Naive thymus-derived CD4-positive, alpha-beta T cell (primary cell): ENCODE measurements at regions of chr10 and their contacts with region 1.

Region 1: GRCh38 chr10:92848441-92849233 is at the start of gene EXOC6:
- DNase-seq: peak; percentile 78 to 93 (median 91)
- ATAC-seq: peak; percentile 91
- H3K4me3 ChIP-seq: peak within 1 kb of the TSS; percentile 70
- H3K4me3 Mint-ChIP-seq: peak within 1 kb of the TSS; percentile 81 to 94 (median 91)
- H3K27ac ChIP-seq: peak within 1 kb of the TSS; percentile 95
- H3K27ac Mint-ChIP-seq: peak within 1 kb of the TSS; percentile 56 to 95 (median 92)
- H3K4me1 ChIP-seq: peaks cover 7 to 19% of the 10 kb centered on the region in 2 donors
- H3K4me1 Mint-ChIP-seq: peaks cover 4 to 48% (median 36%) of the 10 kb centered on the region in 7 donors
- H3K27me3 ChIP-seq: no peaks in the 10 kb centered on the region
- H3K27me3 Mint-ChIP-seq: no peaks in the 10 kb centered on the region
- total RNA-seq, gene EXOC6: 8.1 to 12.1 (median 11.4) TPM

Region 2: DNA sequence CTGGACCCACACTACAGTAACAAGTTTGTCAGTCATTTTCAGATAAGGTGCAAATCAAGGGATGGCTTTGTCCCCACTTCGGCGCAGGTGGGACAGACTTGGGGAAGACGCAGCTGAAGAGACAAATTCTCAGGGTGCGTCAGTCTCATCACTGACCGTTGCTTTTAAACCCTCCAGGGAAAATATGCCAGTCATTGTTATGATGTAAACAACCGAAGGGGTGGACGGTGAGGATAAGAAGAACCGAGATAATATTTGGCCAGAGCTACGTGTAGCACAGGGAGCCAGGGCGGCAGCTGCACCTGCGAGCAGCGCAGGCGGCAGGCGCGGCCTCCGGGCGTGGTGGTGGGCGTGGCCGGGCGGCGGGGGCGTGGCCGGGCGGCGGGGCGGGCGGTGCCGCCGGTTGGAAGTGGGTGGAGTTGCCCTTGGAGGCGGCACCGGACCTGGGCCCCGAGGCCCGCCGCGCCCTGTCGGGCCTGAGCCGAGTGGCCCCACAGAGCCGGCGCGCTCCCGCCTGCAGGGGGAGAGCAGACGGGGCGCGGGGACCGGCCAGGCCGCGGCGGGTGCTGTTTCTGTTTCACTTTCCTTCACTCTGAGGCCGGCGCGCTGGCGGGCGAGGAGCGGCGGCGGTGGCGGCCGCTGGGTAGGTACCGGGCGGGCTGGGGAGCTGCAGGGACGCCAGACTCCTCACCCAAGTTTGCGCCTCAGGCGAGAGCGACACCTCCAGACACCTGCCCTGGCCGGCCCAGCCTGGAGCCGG is 1628.3 kb before region 1 on chr10 and contains the start of gene PCGF5:
- CTCF ChIA-PET with region 1: no interaction called
- POLR2A ChIA-PET with region 1: no interaction called
- intact Hi-C with region 1: loop called in 1 of 2 experiments (anchors 2 kb)
- DNase-seq: peak; percentile 82 to 98 (median 90)
- ATAC-seq: peak; percentile 98
- H3K4me3 ChIP-seq: peak within 1 kb of the TSS; percentile 68
- H3K4me3 Mint-ChIP-seq: peak within 1 kb of the TSS; percentile 84 to 96 (median 90)
- H3K27ac ChIP-seq: peak within 1 kb of the TSS; percentile 90
- H3K27ac Mint-ChIP-seq: peak within 1 kb of the TSS; percentile 76 to 95 (median 89)
- H3K4me1 ChIP-seq: peaks cover 28 to 34% of the 10 kb centered on the region in 2 donors
- H3K4me1 Mint-ChIP-seq: peaks cover 33 to 69% (median 55%) of the 10 kb centered on the region in 7 donors
- H3K27me3 ChIP-seq: no peaks in the 10 kb centered on the region
- H3K27me3 Mint-ChIP-seq: no peaks in the 10 kb centered on the region
- total RNA-seq, gene PCGF5: 41.2 to 62.3 (median 57.4) TPM

Region 3: GRCh38 chr10:92240289-92241157 is 608.1 kb before region 1 on chr10:
- CTCF ChIA-PET with region 1: no interaction called
- POLR2A ChIA-PET with region 1: no interaction called
- intact Hi-C with region 1: loop called in 1 of 2 experiments (anchors 10 kb)
- DNase-seq: peak in 8 of 9 donors; percentile 19 to 43 (median 28)
- ATAC-seq: peak; percentile 58
- H3K4me3 ChIP-seq: peak overlapping the region; percentile 78
- H3K4me3 Mint-ChIP-seq: peak overlapping the region; percentile 88 to 99 (median 92)
- H3K27ac ChIP-seq: peak overlapping the region; percentile 58
- H3K27ac Mint-ChIP-seq: peak overlapping the region; percentile 31 to 94 (median 71)
- H3K4me1 ChIP-seq: peaks cover 0 to 11% of the 10 kb centered on the region in 2 donors
- H3K4me1 Mint-ChIP-seq: peaks cover 14 to 57% (median 31%) of the 10 kb centered on the region in 7 donors
- H3K27me3 ChIP-seq: no peaks in the 10 kb centered on the region
- H3K27me3 Mint-ChIP-seq: peaks cover 0 to 37% (median 0%) of the 10 kb centered on the region in 5 donors

Region 4: GRCh38 chr10:92689663-92690210 is 158.9 kb before region 1 on chr10 and contains the start of gene HHEX:
- CTCF ChIA-PET with region 1: no interaction called
- POLR2A ChIA-PET with region 1: no interaction called
- intact Hi-C with region 1: loop called in 1 of 2 experiments (anchors 1 kb)
- DNase-seq: peak in 3 of 9 donors; percentile 19 to 50 (median 39)
- ATAC-seq: peak; percentile 82
- H3K4me3 ChIP-seq: peak within 1 kb of the TSS; percentile 37
- H3K4me3 Mint-ChIP-seq: peak within 1 kb of the TSS; percentile 73 to 90 (median 82)
- H3K27ac ChIP-seq: no peak within 1 kb of the TSS
- H3K27ac Mint-ChIP-seq: no peak within 1 kb of the TSS
- H3K4me1 ChIP-seq: peaks cover 0 to 29% of the 10 kb centered on the region in 2 donors
- H3K4me1 Mint-ChIP-seq: peaks cover 16 to 31% (median 27%) of the 10 kb centered on the region in 7 donors
- H3K27me3 ChIP-seq: peaks cover 10 to 26% of the 10 kb centered on the region in 2 donors
- H3K27me3 Mint-ChIP-seq: peaks cover 40 to 88% (median 75%) of the 10 kb centered on the region in 5 donors
- total RNA-seq, gene HHEX: 0.27 to 21.4 (median 5.5) TPM in 3 of 5 experiments, not detected in the others

Region 5: DNA sequence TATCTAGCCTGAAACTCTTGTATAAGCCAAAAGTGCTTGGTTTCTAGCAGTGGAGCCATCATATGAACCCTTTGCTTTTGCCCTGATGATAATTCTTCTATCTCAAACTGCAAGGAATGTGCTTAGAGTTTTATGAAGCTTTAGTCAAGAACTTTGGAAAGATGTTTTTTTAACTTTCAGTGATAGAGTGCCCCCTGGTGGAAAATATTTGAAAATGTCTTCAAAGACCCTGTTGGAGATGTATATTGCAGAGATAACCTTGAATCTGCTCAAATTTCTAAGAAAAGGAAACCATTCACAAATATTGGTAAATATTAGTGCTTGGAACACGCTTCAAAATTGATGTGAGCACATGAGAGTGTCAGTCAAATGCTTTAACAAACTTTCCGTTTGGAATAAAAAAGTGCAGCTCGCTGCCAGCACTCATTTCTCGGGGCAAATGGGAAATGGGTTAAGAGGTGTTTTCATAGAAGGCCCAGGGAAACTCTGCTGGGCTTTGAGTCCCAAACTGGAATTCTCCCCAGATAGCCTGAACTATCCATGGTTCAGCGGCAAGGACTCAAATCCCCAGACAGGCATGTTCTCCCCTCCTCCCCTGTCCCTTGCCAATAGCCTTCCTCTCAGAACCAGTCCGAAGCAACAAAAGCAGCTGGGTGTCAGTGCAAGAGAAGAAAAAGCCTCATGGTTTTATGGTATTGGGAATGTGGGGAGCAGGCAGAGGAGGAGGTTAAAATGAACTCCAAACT is 504.2 kb after region 1 on chr10:
- CTCF ChIA-PET with region 1: no interaction called
- POLR2A ChIA-PET with region 1: no interaction called
- intact Hi-C with region 1: loop called in 1 of 2 experiments (anchors 2 kb)
- DNase-seq: peak in 7 of 9 donors; percentile 16 to 53 (median 47)
- ATAC-seq: no peak
- H3K4me3 ChIP-seq: no peak overlapping the region
- H3K4me3 Mint-ChIP-seq: no peak overlapping the region
- H3K27ac ChIP-seq: no peak overlapping the region
- H3K27ac Mint-ChIP-seq: no peak overlapping the region
- H3K4me1 ChIP-seq: no peaks in the 10 kb centered on the region
- H3K4me1 Mint-ChIP-seq: peaks cover 0 to 3% (median 0%) of the 10 kb centered on the region in 7 donors
- H3K27me3 ChIP-seq: peaks cover 0 to 7% of the 10 kb centered on the region in 2 donors
- H3K27me3 Mint-ChIP-seq: peaks cover 0 to 23% (median 18%) of the 10 kb centered on the region in 5 donors

Region 6: DNA sequence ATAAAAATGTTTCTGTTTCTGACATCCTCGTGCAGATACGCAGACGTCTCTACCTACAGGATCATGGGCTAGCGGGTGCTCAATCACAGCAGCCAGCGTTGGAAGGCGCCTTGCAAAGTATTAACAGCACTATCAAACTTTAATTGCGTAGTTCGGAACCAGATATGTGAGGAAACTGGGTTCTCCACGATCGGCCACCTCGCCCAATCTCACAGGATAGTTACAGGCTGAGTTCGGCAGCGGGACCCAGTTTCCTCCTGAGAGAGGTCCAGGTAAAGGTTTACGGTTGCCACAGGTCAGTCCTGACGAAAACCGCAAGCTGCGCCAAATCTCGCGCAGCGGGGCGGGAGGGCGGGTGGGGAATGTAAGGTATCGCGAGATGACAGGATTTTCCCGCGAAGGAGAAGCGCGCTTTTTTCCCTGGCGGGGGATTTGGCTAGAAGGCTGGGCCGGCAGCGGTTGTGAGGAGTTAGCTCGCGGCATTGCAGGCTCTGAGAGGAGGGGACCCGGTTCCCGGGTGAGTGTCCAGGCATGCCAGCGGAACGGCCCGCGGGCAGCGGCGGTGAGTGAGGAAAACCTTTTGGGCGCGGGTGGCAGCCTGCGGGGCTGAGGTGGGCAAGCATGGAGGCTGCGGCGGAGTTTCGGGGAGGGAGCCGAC is 1696.9 kb after region 1 on chr10 and contains the start of gene HELLS:
- CTCF ChIA-PET with region 1: no interaction called
- POLR2A ChIA-PET with region 1: no interaction called
- intact Hi-C with region 1: loop called in 1 of 2 experiments (anchors 10 kb)
- DNase-seq: peak; percentile 30 to 76 (median 63)
- ATAC-seq: peak; percentile 75
- H3K4me3 ChIP-seq: peak within 1 kb of the TSS; percentile 71
- H3K4me3 Mint-ChIP-seq: peak within 1 kb of the TSS; percentile 89 to 97 (median 94)
- H3K27ac ChIP-seq: peak within 1 kb of the TSS; percentile 63
- H3K27ac Mint-ChIP-seq: peak within 1 kb of the TSS; percentile 75 to 97 (median 87)
- H3K4me1 ChIP-seq: peaks cover 3 to 8% of the 10 kb centered on the region in 2 donors
- H3K4me1 Mint-ChIP-seq: peaks cover 15 to 32% (median 26%) of the 10 kb centered on the region in 7 donors
- H3K27me3 ChIP-seq: no peaks in the 10 kb centered on the region
- H3K27me3 Mint-ChIP-seq: peaks cover 0 to 28% (median 10%) of the 10 kb centered on the region in 5 donors
- total RNA-seq, gene HELLS: 5.4 to 107 (median 7.4) TPM